GM12878 (cell line): ENCODE measurements at regions of chr2 and their contacts with region 1.

Region 1: GRCh38 chr2:10883801-10884478 is 27.8 kb upstream of the KCNF1 start:
- DNase-seq: no peak
- ATAC-seq: no peak; the same call in 2 of the 3 replicates
- H3K4me3 ChIP-seq: no peak overlapping the region
- H3K27ac ChIP-seq: no peak overlapping the region
- H3K4me1 ChIP-seq: no peaks in the 10 kb centered on the region; the same call in 1 of the 2 replicates
- H3K27me3 ChIP-seq: peaks cover 0 to 6% of the 10 kb centered on the region in 2 experiments; a peak in 2 of 4 replicates
- CTCF ChIP-seq: no peak
- EP300 ChIP-seq: no peak
- POLR2A ChIP-seq: no peak
- RAD21 ChIP-seq: no peak

Region 2: DNA sequence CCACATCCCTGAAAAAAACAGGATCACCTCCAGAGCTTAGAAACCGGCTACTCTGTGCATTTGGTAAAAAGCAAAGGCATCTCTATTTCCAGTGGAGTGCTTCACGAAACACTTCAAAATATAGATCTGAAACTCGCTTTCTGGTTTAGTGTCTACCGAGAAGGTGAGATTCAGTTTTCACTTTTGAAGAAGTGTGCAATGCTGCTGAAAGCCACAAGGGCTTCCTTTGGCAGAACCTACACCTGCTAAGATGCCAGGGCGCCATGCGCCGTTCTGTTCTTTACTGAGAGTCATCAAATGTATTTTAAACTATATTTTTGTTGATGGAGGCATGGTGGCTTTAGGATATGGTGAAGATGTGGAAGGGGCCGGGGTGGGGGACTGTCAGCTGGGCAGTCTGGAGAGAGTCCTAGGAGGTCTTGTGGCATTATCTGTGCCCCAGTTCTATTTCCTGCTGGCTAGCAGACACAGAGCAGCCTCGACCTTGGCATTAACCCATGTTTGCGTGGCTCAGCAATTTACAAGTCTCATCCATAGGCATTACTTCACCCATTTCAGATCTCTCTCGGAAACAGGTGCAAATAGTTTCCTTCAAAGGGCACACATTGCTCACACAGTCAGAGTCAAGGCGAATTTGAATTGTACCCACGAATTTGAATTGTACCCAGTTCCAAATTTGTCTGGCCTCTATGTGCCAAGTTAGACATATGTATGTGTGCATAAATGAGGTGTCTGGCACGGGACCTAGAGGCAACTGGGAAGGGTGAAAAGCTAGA is 18.9 kb before region 1 on chr2:
- CTCF ChIA-PET with region 1: interaction called, 3 read pairs
- POLR2A ChIA-PET with region 1: interaction called, 4 read pairs
- RAD21 ChIA-PET with region 1: interaction called, 30 read pairs
- SMC1A ChIA-PET with region 1: interaction called, 37 read pairs
- in situ Hi-C with region 1: no loop called
- intact Hi-C with region 1: no loop called
- DNase-seq: peak; percentile 66
- ATAC-seq: peak; percentile 95
- H3K4me3 ChIP-seq: peak overlapping the region; percentile 43; the same call in 1 of the 2 replicates
- H3K27ac ChIP-seq: no peak overlapping the region
- H3K4me1 ChIP-seq: peaks cover 31% of the 10 kb centered on the region
- H3K27me3 ChIP-seq: peaks cover 0 to 4% of the 10 kb centered on the region in 2 experiments; a peak in 3 of 4 replicates
- CTCF ChIP-seq: peak; percentile 31 to 72 (median 55); a peak in 5 of 6 replicates
- EP300 ChIP-seq: no peak
- POLR2A ChIP-seq: no peak
- RAD21 ChIP-seq: peak; percentile 33; the same call in 1 of the 2 replicates

Region 3: GRCh38 chr2:10873790-10874437 is 10.0 kb before region 1 on chr2:
- CTCF ChIA-PET with region 1: interaction called, 3 read pairs
- POLR2A ChIA-PET with region 1: interaction called, 15 read pairs
- RAD21 ChIA-PET with region 1: interaction called, 28 read pairs
- SMC1A ChIA-PET with region 1: interaction called, 29 read pairs
- in situ Hi-C with region 1: no loop called
- intact Hi-C with region 1: no loop called
- DNase-seq: no peak
- ATAC-seq: peak; percentile 61
- H3K4me3 ChIP-seq: no peak overlapping the region
- H3K27ac ChIP-seq: peak overlapping the region; percentile 3; the same call in 1 of the 2 replicates
- H3K4me1 ChIP-seq: peaks cover 2% of the 10 kb centered on the region
- H3K27me3 ChIP-seq: peaks cover 2 to 4% of the 10 kb centered on the region in 2 experiments; a peak in 3 of 4 replicates
- CTCF ChIP-seq: no peak
- EP300 ChIP-seq: no peak
- POLR2A ChIP-seq: no peak
- RAD21 ChIP-seq: no peak